ENCODE measurements at regions of chr6 and their contacts with region 1.

Region 1: GRCh38 chr6:72203983-72204382 is 317.6 kb downstream of the RIMS1 start:
- DNase-seq: no peak
- ATAC-seq: no peak
- H3K4me3 ChIP-seq: no peak overlapping the region
- H3K27ac ChIP-seq: no peak overlapping the region
- H3K4me1 ChIP-seq: no peaks in the 10 kb centered on the region
- H3K27me3 ChIP-seq: no peaks in the 10 kb centered on the region
- CTCF ChIP-seq: no peak
- POLR2A ChIP-seq: no peak
- RAD21 ChIP-seq: no peak

Region 2: GRCh38 chr6:72182337-72183246 is 21.4 kb before region 1 on chr6:
- CTCF ChIA-PET with region 1: no interaction called
- POLR2A ChIA-PET with region 1: no interaction called
- RAD21 ChIA-PET with region 1: no interaction called
- intact Hi-C with region 1: loop called (anchors 1 kb)
- DNase-seq: no peak
- ATAC-seq: no peak
- H3K4me3 ChIP-seq: no peak overlapping the region
- H3K27ac ChIP-seq: no peak overlapping the region
- H3K4me1 ChIP-seq: no peaks in the 10 kb centered on the region
- H3K27me3 ChIP-seq: no peaks in the 10 kb centered on the region
- CTCF ChIP-seq: no peak
- POLR2A ChIP-seq: no peak
- RAD21 ChIP-seq: no peak

Region 3: GRCh38 chr6:73104921-73105320 is 900.9 kb after region 1 on chr6:
- CTCF ChIA-PET with region 1: no interaction called
- POLR2A ChIA-PET with region 1: no interaction called
- RAD21 ChIA-PET with region 1: no interaction called
- intact Hi-C with region 1: no loop called
- DNase-seq: no peak
- ATAC-seq: no peak
- H3K4me3 ChIP-seq: no peak overlapping the region
- H3K27ac ChIP-seq: no peak overlapping the region
- H3K4me1 ChIP-seq: no peaks in the 10 kb centered on the region
- H3K27me3 ChIP-seq: peaks cover 31% of the 10 kb centered on the region
- CTCF ChIP-seq: no peak
- POLR2A ChIP-seq: no peak
- RAD21 ChIP-seq: no peak

Measured in HCT116 (cell line).